ENCODE measurements at regions of chr4 and their contacts with region 1.

Region 1: DNA sequence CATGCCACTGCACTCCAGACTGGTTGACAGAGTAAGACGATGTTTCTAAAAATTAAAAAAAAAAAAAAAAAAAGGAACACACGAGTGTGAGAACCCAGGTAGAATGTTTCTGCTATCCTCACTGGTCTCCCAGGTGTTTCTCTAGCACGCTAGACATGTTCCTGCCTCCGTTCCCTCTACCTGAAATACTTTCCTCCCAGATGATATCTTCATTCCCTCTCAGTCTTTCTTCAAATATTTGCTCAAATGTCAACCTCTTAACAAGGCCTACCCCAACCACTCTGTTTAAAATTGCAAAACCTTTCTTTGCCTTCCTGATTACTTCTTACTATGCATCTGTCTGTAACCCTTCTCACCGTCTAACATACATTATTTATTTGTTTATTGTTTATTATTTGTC is 59.5 kb upstream of the ABCG2 start:
- DNase-seq: no peak
- ATAC-seq: no peak
- H3K4me3 ChIP-seq: no peak overlapping the region
- H3K4me3 Mint-ChIP-seq: no peak overlapping the region
- H3K27ac ChIP-seq: no peak overlapping the region
- H3K27ac Mint-ChIP-seq: no peak overlapping the region
- H3K4me1 ChIP-seq: peaks cover 0 to 3% of the 10 kb centered on the region in 2 donors
- H3K4me1 Mint-ChIP-seq: peaks cover 5% of the 10 kb centered on the region
- H3K27me3 ChIP-seq: peaks cover 0 to 2% (median 0%) of the 10 kb centered on the region in 4 experiments
- H3K27me3 Mint-ChIP-seq: peaks cover 3% of the 10 kb centered on the region
- CTCF ChIP-seq: no peak

Region 2: GRCh38 chr4:88264336-88264735 is 46.4 kb after region 1 on chr4:
- CTCF ChIA-PET with region 1: interaction called, 10 read pairs
- POLR2A ChIA-PET with region 1: no interaction called
- intact Hi-C with region 1: no loop called
- DNase-seq: no peak
- ATAC-seq: no peak
- H3K4me3 ChIP-seq: no peak overlapping the region
- H3K4me3 Mint-ChIP-seq: no peak overlapping the region
- H3K27ac ChIP-seq: no peak overlapping the region
- H3K27ac Mint-ChIP-seq: no peak overlapping the region
- H3K4me1 ChIP-seq: no peaks in the 10 kb centered on the region
- H3K4me1 Mint-ChIP-seq: no peaks in the 10 kb centered on the region
- H3K27me3 ChIP-seq: no peaks in the 10 kb centered on the region
- H3K27me3 Mint-ChIP-seq: no peaks in the 10 kb centered on the region
- CTCF ChIP-seq: no peak

Region 3: DNA sequence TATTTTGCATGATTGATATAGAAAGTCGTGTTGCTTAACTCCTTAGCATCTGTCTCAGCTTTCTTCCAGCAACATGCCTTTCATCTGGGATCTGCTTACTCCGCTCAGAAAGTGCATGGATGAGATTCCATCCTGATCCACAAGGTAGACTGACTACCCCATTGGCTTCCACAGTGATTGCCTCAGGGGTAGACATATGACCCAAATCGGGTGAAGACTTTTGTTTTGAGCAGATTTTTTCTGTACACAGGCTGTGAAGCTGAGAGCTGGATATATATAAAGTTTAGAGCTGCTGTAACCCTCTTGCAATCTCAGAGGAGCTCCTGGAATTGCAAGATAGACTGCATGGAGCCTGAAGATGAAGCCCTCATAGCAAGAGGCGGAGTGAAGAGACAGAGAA is 152.0 kb after region 1 on chr4:
- CTCF ChIA-PET with region 1: interaction called, 17 read pairs
- POLR2A ChIA-PET with region 1: no interaction called
- intact Hi-C with region 1: no loop called
- DNase-seq: no peak
- ATAC-seq: no peak
- H3K4me3 ChIP-seq: no peak overlapping the region
- H3K4me3 Mint-ChIP-seq: no peak overlapping the region
- H3K27ac ChIP-seq: no peak overlapping the region
- H3K27ac Mint-ChIP-seq: no peak overlapping the region
- H3K4me1 ChIP-seq: no peaks in the 10 kb centered on the region
- H3K4me1 Mint-ChIP-seq: no peaks in the 10 kb centered on the region
- H3K27me3 ChIP-seq: no peaks in the 10 kb centered on the region
- H3K27me3 Mint-ChIP-seq: peaks cover 2% of the 10 kb centered on the region
- CTCF ChIP-seq: no peak

Measured in B cell (primary cell).